PC-9 (cell line): ENCODE measurements at regions of chr1 and their contacts with region 1.

Region 1: GRCh38 chr1:53413175-53414001 is 45.8 kb upstream of the DMRTB1 start:
- DNase-seq: peak; percentile 37 to 77
- H3K4me3 ChIP-seq: no peak overlapping the region
- H3K27ac ChIP-seq: peak overlapping the region; percentile 67
- H3K4me1 ChIP-seq: peaks cover 35% of the 10 kb centered on the region
- H3K27me3 ChIP-seq: no peaks in the 10 kb centered on the region
- CTCF ChIP-seq: no peak

Region 2: GRCh38 chr1:53366901-53367502 is 46.4 kb before region 1 on chr1:
- CTCF ChIA-PET with region 1: interaction called, 11 read pairs
- POLR2A ChIA-PET with region 1: no interaction called
- intact Hi-C with region 1: no loop called
- DNase-seq: no peak
- H3K4me3 ChIP-seq: no peak overlapping the region
- H3K27ac ChIP-seq: no peak overlapping the region
- H3K4me1 ChIP-seq: no peaks in the 10 kb centered on the region
- H3K27me3 ChIP-seq: no peaks in the 10 kb centered on the region
- CTCF ChIP-seq: no peak

Region 3: DNA sequence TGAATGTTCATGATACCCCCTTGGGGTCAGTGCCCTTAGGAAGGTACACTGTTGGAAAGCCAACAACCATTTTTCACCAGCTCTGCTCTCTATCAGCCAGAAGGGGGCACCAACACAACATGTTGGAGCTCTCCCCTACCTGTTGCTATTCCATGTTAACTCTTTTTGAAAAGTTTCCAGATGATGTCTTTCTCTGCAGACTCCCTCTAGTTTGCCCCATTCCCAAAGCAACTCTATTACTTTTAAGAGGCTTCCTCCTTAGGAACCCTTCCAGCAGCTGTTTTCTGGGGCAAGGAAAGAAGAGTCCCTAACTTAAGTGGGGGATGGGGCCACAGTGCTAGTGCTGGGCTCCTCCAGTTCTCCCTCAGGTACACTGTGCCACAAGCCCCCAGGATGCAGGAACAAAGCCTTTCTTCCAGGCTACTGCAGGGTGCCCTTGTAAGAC is 447.6 kb after region 1 on chr1:
- CTCF ChIA-PET with region 1: no interaction called
- POLR2A ChIA-PET with region 1: no interaction called
- intact Hi-C with region 1: no loop called
- DNase-seq: peak; percentile 47 to 50
- H3K4me3 ChIP-seq: no peak overlapping the region
- H3K27ac ChIP-seq: no peak overlapping the region
- H3K4me1 ChIP-seq: no peaks in the 10 kb centered on the region
- H3K27me3 ChIP-seq: no peaks in the 10 kb centered on the region
- CTCF ChIP-seq: peak; percentile 80